B cell (primary cell): ENCODE measurements at regions of chrX and their contacts with region 1.

Region 1: DNA sequence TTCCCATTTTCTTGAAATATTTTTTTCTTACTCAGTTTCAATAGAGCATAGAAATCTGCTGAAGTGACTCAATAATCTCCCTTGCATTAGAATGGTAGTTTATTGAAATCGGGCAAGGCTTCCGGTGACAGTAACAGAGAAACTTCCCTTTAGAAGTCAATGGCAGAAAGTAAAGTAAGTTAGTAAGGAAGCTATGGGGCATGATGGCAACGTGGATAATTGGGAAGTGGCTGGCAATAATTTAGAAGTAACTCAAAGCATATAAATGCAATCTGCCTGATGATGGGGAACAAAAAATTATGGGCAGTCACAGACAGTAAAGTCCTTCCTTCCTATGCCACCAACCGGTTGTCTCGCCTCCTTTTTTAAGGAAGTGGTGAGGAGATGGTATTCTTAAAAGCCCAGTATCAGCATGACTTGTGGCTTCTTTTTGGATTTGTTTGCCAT is 7.6 kb downstream of the CYBB start:
- DNase-seq: peak; percentile 73
- ATAC-seq: peak; percentile 63
- H3K4me3 ChIP-seq: peak overlapping the region; percentile 15 to 50 (median 30)
- H3K4me3 Mint-ChIP-seq: peak overlapping the region; percentile 75
- H3K27ac ChIP-seq: peak overlapping the region; percentile 84 to 87
- H3K27ac Mint-ChIP-seq: peak overlapping the region; percentile 94
- H3K4me1 ChIP-seq: peaks cover 71 to 82% of the 10 kb centered on the region in 2 donors
- H3K4me1 Mint-ChIP-seq: peaks cover 71% of the 10 kb centered on the region
- H3K27me3 ChIP-seq: peaks cover 0 to 3% (median 0%) of the 10 kb centered on the region in 4 experiments
- H3K27me3 Mint-ChIP-seq: no peaks in the 10 kb centered on the region
- CTCF ChIP-seq: no peak

Region 2: DNA sequence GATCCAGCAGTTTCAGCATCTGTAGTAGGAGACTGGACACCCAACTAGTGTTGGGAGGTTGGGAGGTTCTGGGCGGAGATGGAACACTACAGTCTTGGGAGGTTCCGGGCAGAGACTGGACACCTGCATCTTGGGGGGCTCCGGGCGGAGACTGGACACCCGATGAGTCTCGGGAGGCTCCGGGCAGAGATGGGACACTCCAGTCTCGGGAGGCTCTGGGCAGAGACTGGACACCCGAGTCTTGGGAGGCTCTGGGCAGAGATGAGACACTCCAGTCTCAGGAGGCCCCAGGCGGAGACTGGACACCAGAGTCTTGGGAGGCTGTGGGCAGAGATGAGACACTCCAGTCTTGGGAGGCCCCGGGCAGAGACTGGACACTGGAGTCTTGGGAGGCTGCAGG is 245.5 kb before region 1 on chrX:
- CTCF ChIA-PET with region 1: no interaction called
- POLR2A ChIA-PET with region 1: no interaction called
- intact Hi-C with region 1: no loop called
- DNase-seq: no peak
- ATAC-seq: no peak
- H3K4me3 ChIP-seq: no peak overlapping the region
- H3K4me3 Mint-ChIP-seq: no peak overlapping the region
- H3K27ac ChIP-seq: no peak overlapping the region
- H3K27ac Mint-ChIP-seq: no peak overlapping the region
- H3K4me1 ChIP-seq: no peaks in the 10 kb centered on the region
- H3K4me1 Mint-ChIP-seq: no peaks in the 10 kb centered on the region
- H3K27me3 ChIP-seq: no peaks in the 10 kb centered on the region
- H3K27me3 Mint-ChIP-seq: no peaks in the 10 kb centered on the region
- CTCF ChIP-seq: no peak

Region 3: GRCh38 chrX:37755025-37755424 is 32.4 kb before region 1 on chrX:
- CTCF ChIA-PET with region 1: interaction called, 4 read pairs
- POLR2A ChIA-PET with region 1: interaction called, 8 read pairs
- intact Hi-C with region 1: loop called (anchors 1 kb)
- DNase-seq: peak; percentile 77
- ATAC-seq: peak; percentile 95
- H3K4me3 ChIP-seq: peak overlapping the region in 1 of 5 experiments; percentile 39
- H3K4me3 Mint-ChIP-seq: no peak overlapping the region
- H3K27ac ChIP-seq: peak overlapping the region; percentile 57 to 75
- H3K27ac Mint-ChIP-seq: no peak overlapping the region
- H3K4me1 ChIP-seq: peaks cover 63 to 73% of the 10 kb centered on the region in 2 donors
- H3K4me1 Mint-ChIP-seq: peaks cover 22% of the 10 kb centered on the region
- H3K27me3 ChIP-seq: no peaks in the 10 kb centered on the region
- H3K27me3 Mint-ChIP-seq: no peaks in the 10 kb centered on the region
- CTCF ChIP-seq: no peak

Region 4: DNA sequence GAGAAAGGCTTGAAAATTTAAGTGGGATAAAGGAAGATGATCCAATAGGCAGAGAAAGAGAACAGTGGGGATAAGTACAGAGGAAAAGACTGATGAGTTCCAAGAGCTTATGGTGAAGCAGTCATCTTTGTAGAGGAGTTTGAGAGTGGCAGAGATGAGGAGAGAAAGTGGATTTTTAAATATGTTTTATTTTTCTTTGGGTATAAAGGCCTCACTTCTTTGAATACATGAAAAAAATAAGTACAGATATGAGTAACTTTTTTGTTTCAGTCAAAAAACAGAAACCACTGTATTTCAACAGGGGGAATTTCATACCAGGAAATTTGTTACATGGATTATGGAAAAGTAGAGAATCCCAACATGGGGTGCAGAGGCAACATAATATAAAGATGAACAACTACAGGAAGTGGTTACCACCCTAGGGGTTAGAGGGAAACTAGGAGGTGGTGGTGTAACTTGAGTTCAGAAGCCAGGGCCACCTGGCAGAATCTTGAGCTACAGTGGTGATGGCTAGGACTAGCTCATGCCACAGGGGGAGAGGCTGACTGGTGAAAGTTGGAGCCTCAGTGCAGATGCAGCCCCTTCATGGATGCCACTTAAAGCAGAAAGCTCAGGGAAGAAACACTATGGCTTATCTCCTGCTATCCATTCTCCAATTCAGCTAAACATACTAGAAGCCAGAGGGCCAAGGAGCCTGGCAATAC is 11.0 kb before region 1 on chrX:
- CTCF ChIA-PET with region 1: interaction called, 8 read pairs
- POLR2A ChIA-PET with region 1: interaction called, 10 read pairs
- intact Hi-C with region 1: loop called (anchors 1 kb)
- DNase-seq: peak; percentile 50
- ATAC-seq: peak; percentile 66
- H3K4me3 ChIP-seq: peak overlapping the region in 1 of 5 experiments; percentile 9
- H3K4me3 Mint-ChIP-seq: peak overlapping the region; percentile 60
- H3K27ac ChIP-seq: peak overlapping the region; percentile 84
- H3K27ac Mint-ChIP-seq: peak overlapping the region; percentile 89
- H3K4me1 ChIP-seq: peaks cover 29 to 36% of the 10 kb centered on the region in 2 donors
- H3K4me1 Mint-ChIP-seq: peaks cover 34% of the 10 kb centered on the region
- H3K27me3 ChIP-seq: no peaks in the 10 kb centered on the region
- H3K27me3 Mint-ChIP-seq: no peaks in the 10 kb centered on the region
- CTCF ChIP-seq: no peak

Region 5: GRCh38 chrX:37818031-37818430 is 30.6 kb after region 1 on chrX:
- CTCF ChIA-PET with region 1: interaction called, 22 read pairs
- POLR2A ChIA-PET with region 1: interaction called, 8 read pairs
- intact Hi-C with region 1: loop called (anchors 1 kb)
- DNase-seq: peak; percentile 67
- ATAC-seq: peak; percentile 66
- H3K4me3 ChIP-seq: peak overlapping the region; percentile 35 to 53 (median 44)
- H3K4me3 Mint-ChIP-seq: peak overlapping the region; percentile 86
- H3K27ac ChIP-seq: peak overlapping the region; percentile 89 to 90
- H3K27ac Mint-ChIP-seq: peak overlapping the region; percentile 99
- H3K4me1 ChIP-seq: peaks cover 53 to 58% of the 10 kb centered on the region in 2 donors
- H3K4me1 Mint-ChIP-seq: peaks cover 73% of the 10 kb centered on the region
- H3K27me3 ChIP-seq: no peaks in the 10 kb centered on the region
- H3K27me3 Mint-ChIP-seq: no peaks in the 10 kb centered on the region
- CTCF ChIP-seq: no peak

Region 6: DNA sequence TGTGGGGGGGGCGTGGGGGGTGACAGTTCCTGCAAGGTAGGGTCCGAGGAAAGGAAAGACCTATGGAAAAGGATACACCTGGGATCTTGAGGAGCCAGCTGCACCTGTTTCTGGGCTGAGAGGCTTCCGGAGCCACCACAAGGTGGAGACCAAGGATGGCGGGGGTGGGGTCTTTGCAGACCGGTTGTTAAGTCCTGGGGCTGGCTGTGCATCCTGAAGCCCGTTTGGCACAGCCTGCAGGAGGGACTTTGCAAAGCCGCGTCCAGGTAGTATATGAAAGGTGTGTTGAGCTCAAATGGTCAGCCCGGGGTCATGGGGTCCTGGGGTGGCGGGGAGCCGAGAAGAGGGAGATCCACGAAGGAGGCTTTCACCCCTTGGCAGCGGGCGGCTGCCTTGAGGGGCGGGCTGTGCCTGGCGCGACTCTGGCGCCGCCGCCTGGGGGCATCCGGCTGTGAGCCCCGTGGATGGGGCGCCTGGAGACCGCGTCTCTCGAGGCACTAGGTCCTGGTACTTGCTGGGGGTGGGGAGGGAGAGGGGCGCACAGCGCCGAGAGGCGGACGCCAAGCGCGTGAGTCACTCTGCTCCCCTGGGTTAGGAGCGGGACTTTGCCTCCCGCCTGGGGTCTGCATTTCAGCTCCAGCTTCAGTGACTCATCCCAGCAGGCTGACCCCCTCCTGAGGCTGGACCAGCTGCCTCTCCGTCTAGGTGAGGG is 118.1 kb after region 1 on chrX:
- CTCF ChIA-PET with region 1: no interaction called
- POLR2A ChIA-PET with region 1: no interaction called
- intact Hi-C with region 1: no loop called
- DNase-seq: peak; percentile 2
- ATAC-seq: no peak
- H3K4me3 ChIP-seq: no peak overlapping the region
- H3K4me3 Mint-ChIP-seq: no peak overlapping the region
- H3K27ac ChIP-seq: no peak overlapping the region
- H3K27ac Mint-ChIP-seq: no peak overlapping the region
- H3K4me1 ChIP-seq: no peaks in the 10 kb centered on the region
- H3K4me1 Mint-ChIP-seq: no peaks in the 10 kb centered on the region
- H3K27me3 ChIP-seq: peaks cover 0 to 7% (median 4%) of the 10 kb centered on the region in 4 experiments
- H3K27me3 Mint-ChIP-seq: peaks cover 28% of the 10 kb centered on the region
- CTCF ChIP-seq: no peak